ENCODE measurements at regions of chr7 and their contacts with region 1.

Region 1: DNA sequence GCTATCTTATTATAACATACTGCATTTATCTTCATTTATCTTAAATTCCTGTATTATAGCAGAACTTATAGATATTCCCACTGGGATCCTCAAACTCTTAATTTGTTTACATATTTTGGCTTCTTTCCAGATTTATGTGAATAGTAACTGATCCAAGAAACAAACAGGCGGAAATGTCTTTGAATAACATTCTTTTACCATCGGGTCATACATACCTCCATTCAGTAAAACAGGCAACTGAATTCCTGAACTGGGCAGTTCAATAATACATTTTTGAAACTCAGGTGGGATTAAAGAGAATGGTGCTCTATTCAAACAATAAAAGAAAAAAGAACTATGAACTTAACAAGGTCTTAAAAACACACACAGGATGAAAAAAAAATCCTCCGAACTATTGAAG is 337.4 kb downstream of the CRPPA start:
- DNase-seq: no peak

Region 2: GRCh38 chr7:15326044-15326644 is 757.8 kb before region 1 on chr7:
- intact Hi-C with region 1: loop called (anchors 10 kb)
- DNase-seq: peak in 1 of 42 donors; percentile 35

Region 3: DNA sequence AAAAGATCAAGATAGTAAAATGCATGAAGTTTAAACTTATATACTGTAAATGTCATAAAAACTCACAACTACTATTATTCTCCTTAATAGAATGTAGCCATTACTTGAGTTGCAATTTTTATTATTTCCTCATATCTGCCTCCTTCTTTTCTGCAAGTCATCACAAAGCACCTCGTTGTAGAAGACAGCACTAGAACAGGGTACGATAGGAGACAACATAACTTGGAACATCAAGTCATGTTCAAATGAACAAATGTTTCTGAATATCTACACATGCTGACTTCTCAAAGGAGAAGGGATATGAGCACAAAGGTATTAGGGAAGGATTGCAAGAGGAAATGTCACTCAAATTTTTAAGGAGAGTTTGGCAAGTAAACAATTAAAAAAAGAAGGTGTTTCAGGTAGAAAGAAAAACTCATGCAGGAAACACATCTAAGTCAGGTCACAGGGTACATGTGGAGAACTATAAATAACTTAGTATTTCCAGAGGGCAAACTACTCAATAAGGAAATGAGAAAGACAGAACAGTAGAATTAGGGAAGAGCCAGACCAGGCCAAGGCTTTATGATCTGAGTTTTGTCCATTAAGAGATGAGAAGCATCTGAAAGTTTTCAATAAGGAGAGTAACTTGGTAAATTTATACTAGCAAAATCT is 150.7 kb after region 1 on chr7:
- intact Hi-C with region 1: no loop called
- DNase-seq: no peak